Testis (tissue), 5 donors: ENCODE measurements at regions of chr1 and their contacts with region 1.

Region 1: DNA sequence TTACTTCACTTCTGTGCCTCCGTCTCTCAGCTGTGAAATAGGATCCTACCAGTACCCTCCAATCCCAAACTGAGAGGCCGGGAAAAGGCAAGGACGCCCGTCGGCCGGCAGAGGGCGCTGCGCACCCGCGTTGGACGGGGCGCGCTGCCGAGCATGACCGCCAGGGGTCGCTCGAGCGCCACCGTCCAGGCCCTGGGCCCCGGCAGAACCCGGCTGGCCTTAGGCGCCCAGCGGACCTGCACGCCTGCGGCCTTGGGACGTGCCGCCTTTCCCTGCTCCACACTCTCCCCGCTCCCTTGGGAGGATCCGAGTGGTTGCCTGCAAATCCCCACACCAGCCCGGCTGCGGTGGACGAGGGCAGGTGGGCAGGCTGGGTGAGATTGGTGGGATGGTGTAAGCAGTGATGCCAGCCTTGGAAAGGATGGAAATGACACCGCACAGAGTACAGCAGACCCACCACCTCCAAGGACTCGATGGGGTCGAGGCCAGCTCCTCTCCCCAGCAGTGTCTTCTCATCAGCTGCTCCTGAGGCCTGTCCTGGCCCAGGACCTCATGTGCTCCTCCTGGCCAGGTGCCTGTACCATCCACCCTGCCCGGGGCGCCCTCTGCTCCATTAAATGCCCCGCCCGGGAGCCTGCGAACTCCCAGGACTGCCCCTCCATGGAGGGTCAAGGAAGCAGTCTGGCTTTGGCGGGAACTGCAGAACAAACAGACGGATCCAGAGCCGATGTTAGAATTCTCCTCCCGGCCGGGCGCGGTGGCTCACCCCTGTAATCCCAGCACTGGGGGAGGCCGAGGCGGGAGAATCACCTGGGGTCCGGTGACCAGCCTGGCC is 47.4 kb upstream of the LBR start:
- DNase-seq: peak; percentile 59
- H3K4me3 ChIP-seq: peak overlapping the region in 1 of 2 donors; percentile 11
- H3K27ac ChIP-seq: no peak overlapping the region
- H3K4me1 ChIP-seq: peaks cover 6% of the 10 kb centered on the region
- H3K27me3 ChIP-seq: no peaks in the 10 kb centered on the region
- CTCF ChIP-seq: peak; percentile 100
- POLR2A ChIP-seq: no peak

Region 2: GRCh38 chr1:225424562-225425200 is 50.5 kb before region 1 on chr1:
- intact Hi-C with region 1: no loop called
- DNase-seq: no peak
- H3K4me3 ChIP-seq: no peak overlapping the region
- H3K27ac ChIP-seq: no peak overlapping the region
- H3K4me1 ChIP-seq: peaks cover 8% of the 10 kb centered on the region
- H3K27me3 ChIP-seq: no peaks in the 10 kb centered on the region
- CTCF ChIP-seq: no peak
- POLR2A ChIP-seq: no peak

Region 3: GRCh38 chr1:225772323-225772768 is 297.1 kb after region 1 on chr1:
- intact Hi-C with region 1: loop called (anchors 5 kb)
- DNase-seq: peak; percentile 90
- H3K4me3 ChIP-seq: no peak overlapping the region
- H3K27ac ChIP-seq: peak overlapping the region in 1 of 2 donors; percentile 54
- H3K4me1 ChIP-seq: peaks cover 61% of the 10 kb centered on the region
- H3K27me3 ChIP-seq: no peaks in the 10 kb centered on the region
- CTCF ChIP-seq: peak; percentile 66 to 77 (median 76)
- POLR2A ChIP-seq: no peak

Region 4: DNA sequence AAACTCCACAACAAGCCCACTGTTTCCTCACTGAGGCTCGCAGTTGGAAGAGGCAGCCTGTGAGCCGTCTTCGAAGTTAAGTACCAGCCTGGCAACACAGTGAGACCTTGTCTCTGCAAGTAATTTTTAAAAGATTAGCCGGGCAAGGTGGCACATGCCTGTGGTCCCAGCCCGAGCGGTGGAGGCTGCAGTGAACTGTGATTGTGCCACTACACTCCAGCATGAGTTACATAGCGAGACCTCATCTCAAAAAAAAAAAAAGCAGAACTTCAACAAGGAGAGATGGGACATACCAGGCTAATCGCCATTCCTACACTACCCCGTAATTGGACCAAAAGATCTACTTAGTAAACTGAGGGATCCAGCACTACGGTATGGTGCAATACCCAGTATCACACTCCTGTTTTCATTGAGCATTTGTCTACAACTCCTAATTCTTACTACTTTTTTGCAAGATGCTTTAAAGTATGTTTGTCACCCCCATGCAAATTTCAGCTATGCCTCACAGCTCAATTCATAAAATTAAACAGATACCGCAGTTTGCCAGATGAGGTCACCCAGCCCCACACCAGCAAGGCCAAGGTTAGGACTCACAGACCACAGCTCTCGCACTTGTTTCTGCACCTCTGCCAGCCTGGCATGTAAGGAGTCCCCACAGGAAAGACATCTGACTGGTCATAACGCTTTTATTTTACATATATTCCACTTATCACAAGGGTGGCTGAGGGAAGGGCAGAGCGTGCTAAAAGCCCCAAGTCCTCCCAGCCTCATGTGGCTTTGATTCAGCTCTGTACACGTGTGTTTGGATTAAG is 502.9 kb after region 1 on chr1:
- intact Hi-C with region 1: loop called (anchors 5 kb)
- DNase-seq: no peak
- H3K4me3 ChIP-seq: no peak overlapping the region
- H3K27ac ChIP-seq: no peak overlapping the region
- H3K4me1 ChIP-seq: no peaks in the 10 kb centered on the region
- H3K27me3 ChIP-seq: no peaks in the 10 kb centered on the region
- CTCF ChIP-seq: no peak
- POLR2A ChIP-seq: no peak